Adrenal gland (tissue), 19 donors: ENCODE measurements at regions of chr3 and their contacts with region 1.

Region 1: GRCh38 chr3:167380004-167380689 is at the start of gene ZBBX:
- DNase-seq: peak; percentile 81 to 96 (median 88)
- H3K4me3 ChIP-seq: peak within 1 kb of the TSS in 1 of 4 donors; percentile 47
- H3K27ac ChIP-seq: no peak within 1 kb of the TSS
- H3K4me1 ChIP-seq: peaks cover 0 to 4% of the 10 kb centered on the region in 2 donors
- H3K27me3 ChIP-seq: no peaks in the 10 kb centered on the region
- CTCF ChIP-seq: peak; percentile 86 to 95 (median 90)
- POLR2A ChIP-seq: no peak
- total RNA-seq, gene ZBBX: 0.22 TPM in 1 of 9 donors, not detected in the others

Region 2: GRCh38 chr3:167684388-167684993 is 304.3 kb after region 1 on chr3:
- intact Hi-C with region 1: loop called in 1 of 2 experiments (anchors 10 kb)
- DNase-seq: peak; percentile 13 to 70 (median 60)
- H3K4me3 ChIP-seq: no peak overlapping the region
- H3K27ac ChIP-seq: no peak overlapping the region
- H3K4me1 ChIP-seq: no peaks in the 10 kb centered on the region
- H3K27me3 ChIP-seq: no peaks in the 10 kb centered on the region
- CTCF ChIP-seq: peak; percentile 49 to 84 (median 67)
- POLR2A ChIP-seq: no peak

Region 3: GRCh38 chr3:167882067-167882667 is 502.0 kb after region 1 on chr3:
- intact Hi-C with region 1: loop called in 1 of 2 experiments (anchors 5 kb)
- DNase-seq: no peak
- H3K4me3 ChIP-seq: no peak overlapping the region
- H3K27ac ChIP-seq: no peak overlapping the region
- H3K4me1 ChIP-seq: no peaks in the 10 kb centered on the region
- H3K27me3 ChIP-seq: no peaks in the 10 kb centered on the region
- CTCF ChIP-seq: peak; percentile 47 to 79 (median 75)
- POLR2A ChIP-seq: no peak